K562 (cell line): ENCODE measurements at regions of chr17 and their contacts with region 1.

Region 1: DNA sequence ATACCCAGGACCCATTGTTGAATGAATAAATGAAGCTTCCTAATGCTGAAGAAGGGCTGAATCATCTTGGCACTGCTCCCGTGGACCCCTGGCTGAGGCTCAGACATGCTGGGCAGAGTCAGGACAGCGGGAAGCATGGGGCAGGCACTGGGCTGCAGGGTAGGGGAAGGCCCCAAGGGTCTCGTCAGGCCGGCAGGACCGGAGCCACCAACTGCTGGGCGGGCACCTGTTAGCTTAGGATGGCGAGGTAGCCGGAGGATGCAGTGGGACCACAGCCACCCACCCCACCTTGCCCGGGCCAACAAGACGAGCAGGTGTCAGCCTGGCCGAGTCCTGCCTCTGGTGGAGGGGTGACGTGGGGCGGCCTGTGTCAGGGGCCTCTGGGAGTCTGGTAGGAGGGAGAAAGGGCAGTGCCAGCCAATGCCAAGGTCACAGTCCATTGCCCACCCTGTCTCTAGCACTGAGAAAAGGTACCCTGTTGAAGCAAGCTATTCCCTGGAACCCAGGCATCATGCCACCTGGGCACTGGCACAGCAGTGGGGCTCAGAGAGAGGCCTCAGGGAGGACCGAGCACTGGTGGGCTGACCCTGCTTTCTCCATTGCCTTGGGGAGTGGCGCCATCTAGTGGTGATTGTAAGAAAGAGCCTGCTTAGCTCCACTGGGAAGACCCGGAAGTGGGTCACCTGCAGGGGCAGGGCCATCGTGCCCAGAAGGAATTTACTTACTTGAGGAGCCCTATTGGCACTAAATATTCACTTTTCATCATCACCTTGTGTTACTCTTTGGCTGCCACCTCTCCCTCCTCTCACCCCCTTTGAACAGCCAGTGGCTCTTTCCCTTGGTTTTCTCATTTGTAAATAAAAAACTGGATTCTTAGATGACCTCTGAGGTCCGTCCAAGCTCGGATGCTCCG is 3.0 kb upstream of the DLX3 start:
- DNase-seq: peak; percentile 86 to 92 (median 88)
- ATAC-seq: peak; percentile 99
- H3K4me3 ChIP-seq: no peak overlapping the region
- H3K27ac ChIP-seq: no peak overlapping the region
- H3K4me1 ChIP-seq: peaks cover 0 to 25% of the 10 kb centered on the region in 2 experiments; a peak in 2 of 5 replicates
- H3K27me3 ChIP-seq: peaks cover 24 to 43% of the 10 kb centered on the region in 2 experiments; a peak in 4 of 5 replicates
- CTCF ChIP-seq: peak; percentile 92 to 96 (median 93)
- EP300 ChIP-seq: no peak
- POLR2A ChIP-seq: no peak
- RAD21 ChIP-seq: peak; percentile 85 to 92

Region 2: GRCh38 chr17:49567871-49568694 is 430.0 kb before region 1 on chr17:
- CTCF ChIA-PET with region 1: interaction called, 8 read pairs
- POLR2A ChIA-PET with region 1: no interaction called
- in situ Hi-C with region 1: loop called (anchors 5 kb)
- intact Hi-C with region 1: loop called (anchors 1 kb)
- DNase-seq: peak; percentile 63 to 86 (median 70)
- ATAC-seq: peak; percentile 75
- H3K4me3 ChIP-seq: no peak overlapping the region
- H3K27ac ChIP-seq: no peak overlapping the region
- H3K4me1 ChIP-seq: peaks cover 0 to 24% of the 10 kb centered on the region in 2 experiments; a peak in 4 of 5 replicates
- H3K27me3 ChIP-seq: peaks cover 11 to 42% of the 10 kb centered on the region in 2 experiments; a peak in 3 of 5 replicates
- CTCF ChIP-seq: peak; percentile 94 to 97 (median 95)
- EP300 ChIP-seq: no peak
- POLR2A ChIP-seq: no peak
- RAD21 ChIP-seq: peak; percentile 88 to 94

Region 3: DNA sequence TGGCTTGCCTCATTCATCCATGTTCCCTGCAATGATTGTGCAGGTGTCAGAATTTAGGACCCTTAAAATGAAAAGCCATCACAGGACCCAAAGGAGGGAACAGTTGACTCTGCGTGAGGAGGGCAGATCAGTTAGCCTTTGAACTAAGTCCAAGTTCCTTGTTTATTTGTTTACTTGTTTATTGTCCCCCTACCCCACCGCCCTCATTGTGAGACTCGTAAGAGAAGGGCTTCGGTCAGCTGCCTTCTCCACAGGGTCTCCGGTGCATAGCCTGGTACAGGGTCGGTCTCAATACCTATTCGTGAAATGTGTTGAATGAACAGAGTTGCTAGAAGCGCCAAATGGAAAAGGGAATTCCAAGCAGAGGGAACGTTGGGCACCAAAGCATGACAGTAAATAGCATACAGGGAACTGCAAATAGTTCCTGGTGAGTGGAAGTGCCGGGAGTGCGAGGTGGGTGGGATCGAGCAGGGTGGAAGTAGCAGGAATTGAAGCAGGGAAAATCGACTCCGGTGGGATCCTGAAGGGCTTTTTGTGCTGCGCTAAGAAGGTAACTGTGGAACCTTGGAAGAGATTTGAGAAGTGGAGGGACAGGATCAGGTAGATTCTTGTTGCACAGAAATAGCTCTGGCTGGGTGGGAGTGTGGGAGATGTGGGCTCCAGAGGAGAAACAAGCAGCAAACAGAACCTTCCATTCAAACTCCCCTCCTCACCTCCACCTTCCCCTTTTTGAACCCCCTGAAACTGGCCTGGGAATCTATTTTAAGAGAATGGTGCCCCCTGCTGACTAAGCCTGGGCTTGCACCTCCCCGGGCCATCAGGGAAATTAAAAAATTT is 303.0 kb before region 1 on chr17:
- CTCF ChIA-PET with region 1: no interaction called
- POLR2A ChIA-PET with region 1: no interaction called
- in situ Hi-C with region 1: no loop called
- intact Hi-C with region 1: loop called (anchors 5 kb)
- DNase-seq: peak; percentile 57 to 68 (median 60)
- ATAC-seq: peak; percentile 64
- H3K4me3 ChIP-seq: no peak overlapping the region
- H3K27ac ChIP-seq: no peak overlapping the region
- H3K4me1 ChIP-seq: peaks cover 0 to 4% of the 10 kb centered on the region in 2 experiments; a peak in 1 of 5 replicates
- H3K27me3 ChIP-seq: no peaks in the 10 kb centered on the region; a peak in 1 of 5 replicates
- CTCF ChIP-seq: peak; percentile 91 to 96 (median 92)
- EP300 ChIP-seq: no peak
- POLR2A ChIP-seq: no peak
- RAD21 ChIP-seq: peak; percentile 93 to 96

Region 4: GRCh38 chr17:49861150-49861892 is 136.7 kb before region 1 on chr17:
- CTCF ChIA-PET with region 1: interaction called, 134 read pairs
- POLR2A ChIA-PET with region 1: interaction called, 8 read pairs
- in situ Hi-C with region 1: loop called (anchors 5 kb)
- intact Hi-C with region 1: loop called (anchors 1 kb)
- DNase-seq: peak; percentile 77 to 92 (median 89)
- ATAC-seq: peak; percentile 82
- H3K4me3 ChIP-seq: no peak overlapping the region
- H3K27ac ChIP-seq: no peak overlapping the region
- H3K4me1 ChIP-seq: peaks cover 0 to 13% of the 10 kb centered on the region in 2 experiments; a peak in 3 of 5 replicates
- H3K27me3 ChIP-seq: peaks cover 16 to 45% of the 10 kb centered on the region in 2 experiments
- CTCF ChIP-seq: peak; percentile 92 to 95 (median 95)
- EP300 ChIP-seq: no peak
- POLR2A ChIP-seq: no peak
- RAD21 ChIP-seq: peak; percentile 95 to 99

Region 5: GRCh38 chr17:49899191-49899485 is 98.9 kb before region 1 on chr17:
- CTCF ChIA-PET with region 1: interaction called, 14 read pairs
- POLR2A ChIA-PET with region 1: no interaction called
- in situ Hi-C with region 1: no loop called
- intact Hi-C with region 1: no loop called
- DNase-seq: peak; percentile 26 to 60 (median 34)
- ATAC-seq: peak; percentile 81
- H3K4me3 ChIP-seq: no peak overlapping the region
- H3K27ac ChIP-seq: no peak overlapping the region
- H3K4me1 ChIP-seq: peaks cover 0 to 7% of the 10 kb centered on the region in 2 experiments; a peak in 1 of 5 replicates
- H3K27me3 ChIP-seq: peaks cover 23 to 57% of the 10 kb centered on the region in 2 experiments; a peak in 4 of 5 replicates
- CTCF ChIP-seq: peak; percentile 36 to 56 (median 52); a peak in 5 of 6 replicates
- EP300 ChIP-seq: no peak
- POLR2A ChIP-seq: no peak
- RAD21 ChIP-seq: peak; percentile 29 to 48; a peak in 3 of 4 replicates